Left ventricle myocardium inferior (tissue), 1 donor: ENCODE measurements at regions of chr9 and their contacts with region 1.

Region 1: GRCh38 chr9:18255158-18255629 is 218.8 kb upstream of the ADAMTSL1 start:
- DNase-seq: peak; percentile 68
- H3K4me3 ChIP-seq: no peak overlapping the region
- H3K27ac ChIP-seq: no peak overlapping the region
- H3K4me1 ChIP-seq: no peaks in the 10 kb centered on the region
- H3K27me3 ChIP-seq: no peaks in the 10 kb centered on the region
- CTCF ChIP-seq: peak; percentile 96

Region 2: GRCh38 chr9:18393340-18394130 is 138.3 kb after region 1 on chr9:
- intact Hi-C with region 1: loop called (anchors 10 kb)
- DNase-seq: no peak
- H3K4me3 ChIP-seq: no peak overlapping the region
- H3K27ac ChIP-seq: peak overlapping the region; percentile 17
- H3K4me1 ChIP-seq: peaks cover 23% of the 10 kb centered on the region
- H3K27me3 ChIP-seq: no peaks in the 10 kb centered on the region
- CTCF ChIP-seq: no peak

Region 3: GRCh38 chr9:18442629-18443491 is 187.7 kb after region 1 on chr9:
- intact Hi-C with region 1: loop called (anchors 5 kb)
- DNase-seq: peak; percentile 72
- H3K4me3 ChIP-seq: no peak overlapping the region
- H3K27ac ChIP-seq: no peak overlapping the region
- H3K4me1 ChIP-seq: peaks cover 31% of the 10 kb centered on the region
- H3K27me3 ChIP-seq: no peaks in the 10 kb centered on the region
- CTCF ChIP-seq: peak; percentile 93

Region 4: GRCh38 chr9:19028835-19029451 is 773.7 kb after region 1 on chr9:
- intact Hi-C with region 1: loop called (anchors 5 kb)
- DNase-seq: no peak
- H3K4me3 ChIP-seq: no peak overlapping the region
- H3K27ac ChIP-seq: no peak overlapping the region
- H3K4me1 ChIP-seq: peaks cover 4% of the 10 kb centered on the region
- H3K27me3 ChIP-seq: peaks cover 15% of the 10 kb centered on the region
- CTCF ChIP-seq: peak; percentile 88